ENCODE measurements at regions of chr3 and their contacts with region 1.

Region 1: GRCh38 chr3:47324278-47324865 is 41.6 kb downstream of the KLHL18 start:
- DNase-seq: no peak
- H3K4me3 ChIP-seq: no peak overlapping the region
- CTCF ChIP-seq: peak; percentile 74

Region 2: GRCh38 chr3:46923559-46924350 is 400.6 kb before region 1 on chr3:
- CTCF ChIA-PET with region 1: interaction called, 73 read pairs
- POLR2A ChIA-PET with region 1: no interaction called
- DNase-seq: no peak
- H3K4me3 ChIP-seq: no peak overlapping the region
- CTCF ChIP-seq: peak; percentile 61

Region 3: GRCh38 chr3:47250309-47251060 is 73.9 kb before region 1 on chr3:
- CTCF ChIA-PET with region 1: interaction called, 29 read pairs
- POLR2A ChIA-PET with region 1: no interaction called
- DNase-seq: no peak
- H3K4me3 ChIP-seq: no peak overlapping the region
- CTCF ChIP-seq: peak; percentile 16

Region 4: DNA sequence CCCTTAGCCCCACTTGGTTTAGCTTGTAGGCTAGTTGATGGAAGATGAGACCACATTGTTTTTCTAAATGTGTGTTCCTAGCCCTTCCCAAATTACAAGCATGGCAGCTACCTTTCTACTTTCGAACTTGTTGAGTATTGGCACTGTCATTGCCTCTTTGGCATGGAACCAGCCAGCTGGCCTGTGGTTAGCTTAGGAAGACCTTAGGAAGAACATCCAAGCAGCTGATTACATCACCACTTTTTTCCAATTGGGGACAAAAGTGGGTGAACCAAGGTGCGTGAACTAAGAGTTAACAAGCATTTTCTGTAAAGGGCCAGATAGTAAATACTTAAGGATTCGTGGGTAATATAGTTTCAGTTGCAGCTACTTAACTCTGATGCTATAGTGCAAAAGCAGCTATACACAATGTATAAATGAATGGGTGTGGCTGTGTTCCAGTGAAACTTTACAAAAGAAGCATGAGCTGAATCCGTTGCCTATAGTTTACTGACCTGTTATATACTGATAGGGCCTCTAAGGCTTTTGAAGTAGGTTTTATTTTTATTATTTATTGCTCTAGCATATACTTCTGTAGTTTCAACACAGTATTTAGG is 33.1 kb before region 1 on chr3:
- CTCF ChIA-PET with region 1: interaction called, 20 read pairs
- POLR2A ChIA-PET with region 1: no interaction called
- DNase-seq: no peak
- H3K4me3 ChIP-seq: no peak overlapping the region
- CTCF ChIP-seq: no peak